Activated CD4-positive, alpha-beta T cell treated with anti-CD3 and anti-CD28 coated beads, Interleukin-2, amount 10 ng/mL, durations not matched to agents 24 days and 14 days (primary cell): ENCODE measurements at regions of chr3 and their contacts with region 1.

Region 1: GRCh38 chr3:105774444-105775180 is 94.2 kb downstream of the CBLB start:
- DNase-seq: no peak
- H3K4me3 Mint-ChIP-seq: no peak overlapping the region
- H3K27ac Mint-ChIP-seq: peak overlapping the region; percentile 78
- H3K4me1 Mint-ChIP-seq: peaks cover 65% of the 10 kb centered on the region
- H3K27me3 Mint-ChIP-seq: no peaks in the 10 kb centered on the region

Region 2: DNA sequence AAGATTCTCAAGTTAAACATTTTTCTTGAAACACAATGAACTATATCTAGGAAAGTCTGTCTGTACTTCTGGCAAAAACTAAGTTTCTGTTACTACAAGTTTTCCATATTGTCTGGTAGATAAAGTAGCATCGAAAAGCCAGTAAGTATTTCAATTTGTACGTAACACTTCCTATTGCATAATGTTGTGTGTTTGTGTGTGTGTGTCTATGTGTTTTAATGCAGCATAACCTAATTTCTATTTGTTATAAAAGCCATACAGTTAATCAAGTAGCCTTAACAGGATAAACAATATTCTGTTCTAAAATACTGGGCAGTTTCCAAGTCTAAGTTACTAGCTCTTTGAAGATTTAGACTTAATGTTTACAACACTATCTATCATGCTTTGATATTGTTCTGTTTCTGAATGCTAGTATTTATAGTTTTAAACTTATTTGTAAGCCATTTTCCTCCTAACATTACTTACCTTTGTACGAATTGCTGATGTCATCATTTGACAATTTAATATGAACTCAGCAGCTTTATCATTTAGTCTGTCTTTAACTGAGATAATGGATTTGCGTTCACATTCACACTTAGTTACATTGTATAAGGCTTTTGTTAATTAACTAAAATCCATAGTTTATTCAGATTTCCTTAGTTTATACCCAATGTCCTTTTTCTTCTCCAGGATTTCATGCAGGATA is 69.7 kb before region 1 on chr3:
- intact Hi-C with region 1: no loop called
- DNase-seq: no peak
- H3K4me3 Mint-ChIP-seq: no peak overlapping the region
- H3K27ac Mint-ChIP-seq: no peak overlapping the region
- H3K4me1 Mint-ChIP-seq: peaks cover 19% of the 10 kb centered on the region
- H3K27me3 Mint-ChIP-seq: no peaks in the 10 kb centered on the region

Region 3: GRCh38 chr3:105729667-105730066 is 44.9 kb before region 1 on chr3:
- intact Hi-C with region 1: no loop called
- DNase-seq: no peak
- H3K4me3 Mint-ChIP-seq: no peak overlapping the region
- H3K27ac Mint-ChIP-seq: no peak overlapping the region
- H3K4me1 Mint-ChIP-seq: peaks cover 10% of the 10 kb centered on the region
- H3K27me3 Mint-ChIP-seq: no peaks in the 10 kb centered on the region

Region 4: GRCh38 chr3:105752744-105753415 is 21.7 kb before region 1 on chr3:
- intact Hi-C with region 1: loop called (anchors 1 kb)
- DNase-seq: peak; percentile 83
- H3K4me3 Mint-ChIP-seq: peak overlapping the region; percentile 64
- H3K27ac Mint-ChIP-seq: peak overlapping the region; percentile 95
- H3K4me1 Mint-ChIP-seq: peaks cover 67% of the 10 kb centered on the region
- H3K27me3 Mint-ChIP-seq: no peaks in the 10 kb centered on the region

Region 5: GRCh38 chr3:105806361-105806760 is 31.7 kb after region 1 on chr3:
- intact Hi-C with region 1: loop called (anchors 5 kb)
- DNase-seq: peak; percentile 75
- H3K4me3 Mint-ChIP-seq: peak overlapping the region; percentile 36
- H3K27ac Mint-ChIP-seq: peak overlapping the region; percentile 93
- H3K4me1 Mint-ChIP-seq: peaks cover 44% of the 10 kb centered on the region
- H3K27me3 Mint-ChIP-seq: no peaks in the 10 kb centered on the region